Activated CD4-positive, alpha-beta T cell treated with anti-CD3 and anti-CD28 coated beads, Interleukin-2, amount 10 ng/mL, durations not matched to agents 24 days and 14 days (primary cell): ENCODE measurements at regions of chr7 and their contacts with region 1.

Region 1: DNA sequence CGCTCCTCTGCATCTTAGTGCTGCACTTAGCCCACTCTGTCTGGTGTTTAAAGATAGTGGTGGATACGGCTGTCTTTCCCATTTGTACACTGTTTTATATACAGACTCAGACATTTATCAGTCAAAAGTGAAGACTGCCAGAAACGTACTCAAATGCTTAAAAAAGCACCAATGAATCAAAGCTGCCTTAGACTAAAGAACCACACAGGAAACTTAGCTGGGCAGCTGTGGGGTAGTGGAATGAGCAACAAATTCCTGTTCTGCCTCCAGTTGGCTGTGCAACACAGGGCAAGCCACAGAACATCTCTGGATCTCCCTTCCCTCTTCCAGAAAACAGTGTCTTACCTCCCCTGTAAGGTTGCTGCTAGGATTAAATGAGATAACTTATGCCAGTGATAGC is 76.0 kb downstream of the ATXN7L1 start:
- DNase-seq: peak; percentile 73
- H3K4me3 Mint-ChIP-seq: peak overlapping the region; percentile 13
- H3K27ac Mint-ChIP-seq: peak overlapping the region; percentile 56
- H3K4me1 Mint-ChIP-seq: peaks cover 45% of the 10 kb centered on the region
- H3K27me3 Mint-ChIP-seq: peaks cover 1% of the 10 kb centered on the region

Region 2: DNA sequence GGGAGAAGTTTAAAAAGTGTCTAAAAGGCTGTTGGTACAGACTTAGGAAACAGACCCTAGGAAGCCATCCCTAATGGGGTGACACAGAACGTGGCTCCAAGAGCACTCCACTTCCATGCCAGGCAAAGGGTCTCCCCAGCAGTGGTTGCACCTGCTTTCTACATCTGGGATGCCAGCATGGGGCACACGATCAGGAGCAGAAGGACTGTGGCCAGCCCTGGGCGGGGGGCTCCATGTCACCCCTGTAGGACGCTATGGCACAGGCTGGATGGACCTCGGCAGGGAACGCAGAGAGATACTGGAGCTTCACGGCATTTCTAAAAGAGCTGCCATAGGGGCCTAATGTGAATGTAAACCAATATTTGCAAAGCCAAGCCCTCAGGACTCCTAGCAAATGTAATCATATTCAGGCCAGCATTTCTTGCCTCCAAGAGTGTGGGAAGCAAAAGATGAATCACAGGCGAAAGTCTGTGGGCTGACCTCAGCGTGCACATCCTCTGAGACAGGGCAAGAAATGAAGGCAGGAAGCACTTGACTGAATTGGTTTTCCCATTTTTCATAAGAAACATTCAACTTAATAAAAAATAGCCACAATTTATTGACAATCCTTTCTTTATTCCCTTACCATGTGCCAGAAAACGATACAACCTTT is 17.9 kb before region 1 on chr7:
- intact Hi-C with region 1: loop called (anchors 1 kb)
- DNase-seq: peak; percentile 64
- H3K4me3 Mint-ChIP-seq: no peak overlapping the region
- H3K27ac Mint-ChIP-seq: no peak overlapping the region
- H3K4me1 Mint-ChIP-seq: peaks cover 13% of the 10 kb centered on the region
- H3K27me3 Mint-ChIP-seq: peaks cover 32% of the 10 kb centered on the region